ENCODE measurements at regions of chr17 and their contacts with region 1.

Region 1: GRCh38 chr17:58974354-58974753 is 132.3 kb downstream of the TRIM37 start:
- DNase-seq: no peak
- ATAC-seq: peak; percentile 38; the same call in 2 of the 3 replicates
- H3K4me3 ChIP-seq: no peak overlapping the region
- H3K27ac ChIP-seq: no peak overlapping the region; the same call in 1 of the 2 replicates
- H3K4me1 ChIP-seq: peaks cover 13% of the 10 kb centered on the region
- H3K27me3 ChIP-seq: no peaks in the 10 kb centered on the region
- CTCF ChIP-seq: no peak
- EP300 ChIP-seq: no peak
- POLR2A ChIP-seq: no peak
- RAD21 ChIP-seq: no peak

Region 2: GRCh38 chr17:58913585-58914444 is 60.5 kb before region 1 on chr17:
- CTCF ChIA-PET with region 1: no interaction called
- POLR2A ChIA-PET with region 1: no interaction called
- RAD21 ChIA-PET with region 1: no interaction called
- SMC1A ChIA-PET with region 1: no interaction called
- in situ Hi-C with region 1: no loop called
- intact Hi-C with region 1: no loop called
- DNase-seq: no peak
- ATAC-seq: no peak
- H3K4me3 ChIP-seq: no peak overlapping the region
- H3K27ac ChIP-seq: no peak overlapping the region
- H3K4me1 ChIP-seq: no peaks in the 10 kb centered on the region
- H3K27me3 ChIP-seq: no peaks in the 10 kb centered on the region
- CTCF ChIP-seq: no peak
- EP300 ChIP-seq: no peak
- POLR2A ChIP-seq: no peak
- RAD21 ChIP-seq: no peak

Region 3: DNA sequence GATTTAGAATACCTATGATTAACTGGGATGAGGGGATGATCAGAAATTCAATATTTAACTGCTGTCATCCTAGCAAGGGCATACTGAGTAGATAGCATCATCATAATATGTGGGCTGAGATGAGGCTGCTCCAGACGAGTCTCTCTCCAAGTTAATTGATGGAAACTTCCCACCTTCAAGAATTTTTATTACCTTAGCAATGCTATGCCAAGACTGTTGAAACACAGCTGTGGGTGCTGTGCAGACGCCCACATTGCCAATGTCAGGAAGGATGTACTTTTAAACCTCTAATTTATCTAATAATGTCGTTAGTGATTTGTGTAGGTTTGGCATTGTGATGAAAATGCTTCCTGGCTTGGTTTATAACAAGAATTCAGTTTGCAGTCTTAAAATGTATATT is 38.1 kb before region 1 on chr17:
- CTCF ChIA-PET with region 1: no interaction called
- POLR2A ChIA-PET with region 1: no interaction called
- RAD21 ChIA-PET with region 1: no interaction called
- SMC1A ChIA-PET with region 1: no interaction called
- in situ Hi-C with region 1: no loop called
- intact Hi-C with region 1: no loop called
- DNase-seq: no peak
- ATAC-seq: no peak
- H3K4me3 ChIP-seq: no peak overlapping the region
- H3K27ac ChIP-seq: no peak overlapping the region
- H3K4me1 ChIP-seq: no peaks in the 10 kb centered on the region
- H3K27me3 ChIP-seq: no peaks in the 10 kb centered on the region
- CTCF ChIP-seq: no peak
- EP300 ChIP-seq: no peak
- POLR2A ChIP-seq: no peak
- RAD21 ChIP-seq: no peak

Region 4: GRCh38 chr17:58960068-58960467 is 14.3 kb before region 1 on chr17:
- CTCF ChIA-PET with region 1: interaction called, 8 read pairs
- POLR2A ChIA-PET with region 1: interaction called, 5 read pairs
- RAD21 ChIA-PET with region 1: interaction called, 4 read pairs
- SMC1A ChIA-PET with region 1: interaction called, 14 read pairs
- in situ Hi-C with region 1: no loop called
- intact Hi-C with region 1: no loop called
- DNase-seq: no peak
- ATAC-seq: peak; percentile 58
- H3K4me3 ChIP-seq: no peak overlapping the region
- H3K27ac ChIP-seq: no peak overlapping the region
- H3K4me1 ChIP-seq: no peaks in the 10 kb centered on the region
- H3K27me3 ChIP-seq: no peaks in the 10 kb centered on the region
- CTCF ChIP-seq: peak; percentile 5 to 53 (median 24); a peak in 3 of 6 replicates
- EP300 ChIP-seq: no peak
- POLR2A ChIP-seq: no peak
- RAD21 ChIP-seq: peak; percentile 61

Measured in GM12878 (cell line).